ENCODE measurements at regions of chr20 and their contacts with region 1.

Region 1: DNA sequence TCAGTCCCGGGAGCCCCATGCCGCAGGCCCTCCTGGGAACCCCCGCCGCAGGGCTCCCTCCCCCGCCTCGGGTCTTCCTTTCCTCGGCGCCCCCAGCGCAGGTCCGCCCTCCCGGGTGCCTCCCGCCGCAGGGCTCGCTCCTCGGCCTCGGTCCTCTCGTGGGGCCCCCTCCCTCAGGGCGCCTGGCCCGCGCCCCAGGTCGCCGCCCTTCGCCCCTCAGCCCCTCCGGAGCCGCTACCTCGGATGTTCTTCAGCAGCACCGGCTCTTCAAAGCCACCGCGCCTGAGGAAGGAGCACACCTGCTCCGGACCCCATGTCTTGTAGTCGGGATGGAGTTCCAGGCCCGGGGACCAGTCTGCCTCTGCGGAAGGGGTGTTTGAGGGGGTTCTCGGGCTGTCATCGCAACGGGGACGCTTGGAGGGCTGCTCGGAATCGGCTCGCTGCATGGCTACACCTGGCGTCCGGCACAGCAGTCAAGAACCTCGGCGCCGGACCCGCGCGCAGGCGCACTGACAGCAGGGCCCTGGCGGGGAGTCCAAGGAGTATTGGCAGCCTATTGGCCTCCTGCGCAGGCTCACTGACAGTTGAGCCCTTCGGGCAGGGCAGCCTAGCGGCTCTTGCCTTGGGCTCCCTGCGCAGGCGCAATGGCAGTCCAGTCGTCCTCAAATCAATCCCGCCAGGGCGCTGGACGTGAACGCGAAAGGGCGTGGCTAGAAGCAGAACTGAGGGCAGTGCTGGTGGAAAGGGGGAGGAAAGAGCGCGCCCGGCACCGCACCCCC is at the start of gene SAMHD1:
- DNase-seq: peak; percentile 90
- H3K4me3 Mint-ChIP-seq: peak within 1 kb of the TSS; percentile 92
- H3K27ac Mint-ChIP-seq: peak within 1 kb of the TSS; percentile 91
- H3K4me1 Mint-ChIP-seq: peaks cover 47% of the 10 kb centered on the region
- H3K27me3 Mint-ChIP-seq: no peaks in the 10 kb centered on the region
- total RNA-seq, gene SAMHD1: 55.0 and 59.9 TPM in 2 replicates

Region 2: GRCh38 chr20:36969478-36970186 is 18.2 kb after region 1 on chr20:
- intact Hi-C with region 1: loop called (anchors 2 kb)
- DNase-seq: peak; percentile 16
- H3K4me3 Mint-ChIP-seq: peak overlapping the region; percentile 53
- H3K27ac Mint-ChIP-seq: peak overlapping the region; percentile 77
- H3K4me1 Mint-ChIP-seq: peaks cover 27% of the 10 kb centered on the region
- H3K27me3 Mint-ChIP-seq: no peaks in the 10 kb centered on the region

Region 3: GRCh38 chr20:36975099-36975818 is 23.9 kb after region 1 on chr20:
- intact Hi-C with region 1: loop called (anchors 2 kb)
- DNase-seq: peak; percentile 55
- H3K4me3 Mint-ChIP-seq: peak overlapping the region; percentile 15
- H3K27ac Mint-ChIP-seq: peak overlapping the region; percentile 90
- H3K4me1 Mint-ChIP-seq: peaks cover 20% of the 10 kb centered on the region
- H3K27me3 Mint-ChIP-seq: no peaks in the 10 kb centered on the region

Region 4: DNA sequence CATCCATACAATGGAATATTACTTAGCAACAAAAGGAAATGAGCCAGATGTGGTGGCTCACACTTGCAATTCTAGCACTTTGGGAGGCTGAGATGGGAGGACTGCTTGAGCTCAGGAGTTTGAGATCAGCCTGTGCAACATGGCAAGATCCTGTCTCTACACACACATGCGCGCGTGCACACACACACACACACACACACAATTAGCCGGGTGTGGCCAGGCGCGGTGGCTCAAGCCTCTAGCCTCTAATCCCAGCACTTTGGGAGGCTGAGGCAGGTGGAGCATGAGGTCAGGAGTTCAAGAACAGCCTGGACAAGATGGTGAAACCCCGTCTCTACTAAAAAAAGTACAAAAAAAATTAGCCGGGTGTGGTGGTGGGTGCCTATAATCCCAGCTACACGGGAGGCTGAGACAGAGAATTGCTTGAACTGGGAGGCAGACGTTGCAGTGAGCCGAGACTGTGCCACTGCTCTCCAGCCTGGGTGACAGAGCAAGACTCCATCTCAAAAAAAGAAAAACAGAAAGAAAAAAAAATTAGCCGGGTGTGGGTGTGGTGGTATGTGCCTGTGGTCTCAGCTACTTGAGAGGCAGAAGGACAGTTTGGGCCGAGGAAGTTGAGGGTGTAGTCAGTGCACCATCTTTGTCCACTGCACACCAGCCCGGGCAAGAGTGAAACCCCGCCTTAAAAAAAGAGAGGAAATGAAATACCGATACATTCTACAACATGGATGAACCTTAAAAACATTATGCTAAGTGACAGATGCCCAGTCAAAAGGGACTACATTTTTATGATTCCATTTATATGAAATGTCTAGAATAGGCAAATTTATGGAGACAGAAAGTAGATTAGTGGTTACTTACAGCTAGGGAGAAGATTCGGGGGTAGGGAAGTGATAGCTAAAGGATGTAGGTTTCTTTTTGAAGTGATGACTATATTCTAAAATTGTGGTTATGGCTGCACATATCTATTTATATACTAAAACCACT is 91.9 kb after region 1 on chr20:
- intact Hi-C with region 1: loop called (anchors 2 kb)
- DNase-seq: peak; percentile 40
- H3K4me3 Mint-ChIP-seq: peak overlapping the region; percentile 72
- H3K27ac Mint-ChIP-seq: peak overlapping the region; percentile 87
- H3K4me1 Mint-ChIP-seq: peaks cover 45% of the 10 kb centered on the region
- H3K27me3 Mint-ChIP-seq: no peaks in the 10 kb centered on the region

Region 5: DNA sequence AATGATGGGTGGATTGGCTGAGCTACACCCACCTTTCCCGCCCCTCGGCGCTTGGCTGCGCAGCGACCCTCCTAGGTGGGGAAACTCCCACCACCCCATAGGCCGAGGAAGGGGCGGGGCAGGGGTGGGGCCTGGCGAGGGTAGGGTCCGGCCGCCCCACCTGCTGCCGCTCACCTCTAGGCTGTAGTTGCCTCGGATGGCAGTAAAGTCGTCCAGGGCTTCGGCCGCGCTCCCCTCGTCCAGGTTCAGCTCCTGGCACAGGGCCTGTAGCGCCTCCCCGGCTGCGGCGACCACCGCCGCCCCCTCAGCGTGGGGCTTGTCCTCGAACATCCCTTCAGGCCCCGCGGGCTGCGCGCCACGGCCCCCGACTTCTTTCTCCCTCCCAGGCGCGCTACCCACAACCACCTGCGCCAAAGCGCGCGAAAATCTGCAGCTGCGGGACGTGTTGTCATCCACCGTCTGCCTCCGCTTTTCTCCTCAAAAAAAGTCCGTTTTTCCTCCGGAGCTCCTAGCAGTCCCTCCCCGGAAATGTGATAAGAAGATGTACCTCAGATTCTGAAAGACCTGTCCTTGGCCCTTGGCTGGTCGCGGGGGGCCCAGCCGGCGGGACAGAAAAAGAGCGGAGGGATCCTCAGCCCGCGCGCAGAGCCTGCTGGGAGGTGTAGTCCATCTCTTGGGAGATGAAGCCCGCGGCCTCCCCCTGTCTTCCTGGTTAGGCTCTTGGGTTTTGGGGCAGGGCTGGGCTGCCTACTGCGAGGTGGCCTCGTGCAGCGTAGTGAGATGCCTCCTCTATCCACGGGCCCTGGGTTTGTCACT is 144.4 kb after region 1 on chr20 and contains the start of gene RBL1:
- intact Hi-C with region 1: loop called (anchors 2 kb)
- DNase-seq: peak; percentile 83
- H3K4me3 Mint-ChIP-seq: peak within 1 kb of the TSS; percentile 99
- H3K27ac Mint-ChIP-seq: peak within 1 kb of the TSS; percentile 100
- H3K4me1 Mint-ChIP-seq: peaks cover 37% of the 10 kb centered on the region
- H3K27me3 Mint-ChIP-seq: peaks cover 3% of the 10 kb centered on the region
- total RNA-seq, gene RBL1: 49.2 and 53.7 TPM in 2 replicates

Measured in activated T-helper 1 cell treated with anti-CD3 and anti-CD28 coated beads, Interleukin-12 subunit alpha, Interleukin-12 subunit beta, Interleukin-2, Interleukin-4 antibody, amounts not matched to agents 30 ng/mL and 10 ng/mL and 1 ng/mL, durations not matched to agents 14 hours and 24 hours and 36 hours (primary cell).